Right ventricle myocardium inferior (tissue), 1 donor: ENCODE measurements at regions of chr10 and their contacts with region 1.

Region 1: DNA sequence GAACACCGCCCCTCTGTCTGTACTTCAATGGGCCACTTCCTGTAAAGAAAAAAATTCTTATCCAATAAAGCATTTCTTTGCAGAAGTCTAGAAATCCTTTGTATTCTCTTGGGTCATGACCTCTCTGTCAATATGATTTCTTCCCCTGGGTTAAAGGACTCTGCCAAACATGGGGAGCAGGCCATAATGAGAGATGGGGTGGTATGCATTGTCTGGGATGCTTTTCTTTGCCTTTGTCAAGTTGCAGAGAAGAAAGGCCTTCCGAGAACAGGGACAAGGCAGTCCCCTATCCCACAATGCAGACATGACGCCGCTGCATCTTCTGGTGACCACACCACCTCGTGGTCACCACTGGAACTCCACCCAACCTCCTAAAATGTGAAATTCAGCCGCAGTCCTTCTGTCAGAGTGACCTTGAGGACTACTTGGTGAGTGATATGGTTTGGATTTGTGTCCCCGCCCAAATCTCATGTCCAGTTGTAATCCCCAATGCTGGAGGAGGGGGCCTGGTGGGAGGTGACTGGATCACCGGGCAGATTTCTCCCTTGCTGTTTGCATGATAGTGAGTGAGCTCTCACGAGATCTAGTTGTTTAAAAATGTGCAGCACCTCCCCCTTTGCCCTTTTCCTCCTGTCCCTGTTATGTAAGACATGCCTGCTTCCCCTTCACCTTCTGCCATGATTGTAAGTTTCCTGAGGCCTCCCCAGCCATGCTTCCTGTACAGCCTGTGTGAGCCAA is 15.2 kb upstream of the FRMPD2 start:
- DNase-seq: peak; percentile 78
- ATAC-seq: peak; percentile 50

Region 2: GRCh38 chr10:48215488-48216204 is 74.0 kb before region 1 on chr10:
- intact Hi-C with region 1: loop called (anchors 2 kb)
- DNase-seq: no peak
- ATAC-seq: no peak

Region 3: GRCh38 chr10:48309711-48310226 is 20.1 kb after region 1 on chr10:
- intact Hi-C with region 1: no loop called
- DNase-seq: no peak
- ATAC-seq: no peak